ENCODE measurements at regions of chrX and their contacts with region 1.

Region 1: DNA sequence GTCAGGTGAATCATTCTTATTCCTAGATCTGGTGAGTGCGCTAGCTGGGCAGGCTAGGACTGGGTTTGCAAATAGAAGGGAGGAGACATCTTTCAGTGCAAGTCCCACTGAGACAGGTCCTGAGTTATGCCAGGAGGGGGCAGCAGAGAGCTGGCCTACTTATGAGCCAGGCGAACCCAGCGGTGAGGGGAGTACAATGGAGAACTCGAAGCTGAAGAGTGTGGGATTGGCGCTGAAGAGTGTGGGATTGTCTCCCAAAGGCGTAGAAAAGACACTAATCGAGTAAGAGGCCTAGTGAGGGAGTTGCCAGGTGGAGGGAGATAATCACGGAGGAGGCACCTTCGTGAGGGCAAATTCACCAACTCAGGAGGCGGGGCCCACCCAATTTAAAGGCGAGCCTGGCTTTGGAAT is 91.7 kb upstream of the CXorf66 start:
- DNase-seq: peak; percentile 35 to 69 (median 56)
- ATAC-seq: peak in 3 of 4 donors; percentile 57 to 80 (median 78)
- H3K4me3 ChIP-seq: no peak overlapping the region
- H3K27ac ChIP-seq: no peak overlapping the region
- H3K4me1 ChIP-seq: no peaks in the 10 kb centered on the region
- H3K27me3 ChIP-seq: peaks cover 0 to 15% (median 0%) of the 10 kb centered on the region in 9 donors
- CTCF ChIP-seq: peak; percentile 56 to 84 (median 72)
- POLR2A ChIP-seq: no peak

Region 2: GRCh38 chrX:140086691-140087090 is 29.7 kb after region 1 on chrX:
- intact Hi-C with region 1: loop called in 1 of 10 experiments (anchors 2 kb)
- DNase-seq: no peak
- ATAC-seq: no peak
- H3K4me3 ChIP-seq: no peak overlapping the region
- H3K27ac ChIP-seq: no peak overlapping the region
- H3K4me1 ChIP-seq: peaks cover 0 to 2% (median 0%) of the 10 kb centered on the region in 12 donors
- H3K27me3 ChIP-seq: peaks cover 0 to 40% (median 0%) of the 10 kb centered on the region in 9 donors
- CTCF ChIP-seq: no peak
- POLR2A ChIP-seq: no peak

Region 3: GRCh38 chrX:140141444-140142029 is 84.5 kb after region 1 on chrX:
- intact Hi-C with region 1: loop called in 4 of 10 experiments (anchors 5 kb)
- DNase-seq: no peak
- ATAC-seq: no peak
- H3K4me3 ChIP-seq: no peak overlapping the region
- H3K27ac ChIP-seq: no peak overlapping the region
- H3K4me1 ChIP-seq: no peaks in the 10 kb centered on the region
- H3K27me3 ChIP-seq: peaks cover 0 to 17% (median 0%) of the 10 kb centered on the region in 9 donors
- CTCF ChIP-seq: peak in 11 of 12 donors; percentile 36 to 73 (median 57)
- POLR2A ChIP-seq: no peak

Region 4: DNA sequence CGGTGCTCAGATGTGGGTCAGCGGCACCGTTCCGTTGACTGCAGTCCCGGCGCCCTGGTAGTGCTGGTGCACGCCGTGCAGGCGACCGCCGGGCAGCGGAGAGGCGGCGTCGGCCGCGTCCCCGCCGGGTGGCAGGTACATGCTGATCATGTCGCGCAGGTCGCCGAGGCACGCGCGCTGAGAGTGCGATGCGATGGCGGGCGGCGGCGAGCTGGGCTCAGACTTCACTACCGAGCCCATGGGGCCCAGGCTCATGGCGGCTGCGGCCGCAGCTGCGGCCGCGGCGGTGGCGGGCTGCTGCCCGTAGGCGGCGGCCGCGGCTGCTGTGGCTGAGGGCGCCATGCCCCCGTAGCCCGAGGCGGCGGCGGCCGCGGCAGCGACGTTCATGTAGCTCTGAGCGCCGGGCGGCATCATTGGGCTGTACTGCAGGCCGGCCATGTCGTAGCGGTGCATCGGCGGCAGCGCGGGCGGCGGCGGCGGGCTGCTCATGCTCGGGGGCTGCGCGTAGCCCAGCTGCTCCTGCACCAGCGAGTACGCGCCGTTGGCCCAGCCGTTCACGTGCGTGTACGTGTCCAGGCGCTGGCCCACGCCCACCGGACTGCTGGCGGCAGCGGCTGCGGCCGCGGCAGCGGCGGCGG is 446.8 kb after region 1 on chrX:
- intact Hi-C with region 1: loop called in 3 of 10 experiments (anchors 5 to 10 kb)
- DNase-seq: peak in 1 of 5 donors; percentile 15
- ATAC-seq: peak in 2 of 4 donors; percentile 67 to 73
- H3K4me3 ChIP-seq: peak overlapping the region in 9 of 12 donors; percentile 5 to 45 (median 36)
- H3K27ac ChIP-seq: no peak overlapping the region
- H3K4me1 ChIP-seq: peaks cover 0 to 36% (median 0%) of the 10 kb centered on the region in 12 donors
- H3K27me3 ChIP-seq: peaks cover 10 to 96% (median 55%) of the 10 kb centered on the region in 9 donors
- CTCF ChIP-seq: peak in 2 of 12 donors; percentile 5 to 15
- POLR2A ChIP-seq: no peak

Region 5: GRCh38 chrX:140664939-140665338 is 607.9 kb after region 1 on chrX:
- intact Hi-C with region 1: loop called in 9 of 10 experiments (anchors 5 to 10 kb)
- DNase-seq: no peak
- ATAC-seq: no peak
- H3K4me3 ChIP-seq: no peak overlapping the region
- H3K27ac ChIP-seq: no peak overlapping the region
- H3K4me1 ChIP-seq: no peaks in the 10 kb centered on the region
- H3K27me3 ChIP-seq: peaks cover 0 to 10% (median 0%) of the 10 kb centered on the region in 9 donors
- CTCF ChIP-seq: peak in 9 of 12 donors; percentile 10 to 39 (median 23)
- POLR2A ChIP-seq: no peak

Region 6: DNA sequence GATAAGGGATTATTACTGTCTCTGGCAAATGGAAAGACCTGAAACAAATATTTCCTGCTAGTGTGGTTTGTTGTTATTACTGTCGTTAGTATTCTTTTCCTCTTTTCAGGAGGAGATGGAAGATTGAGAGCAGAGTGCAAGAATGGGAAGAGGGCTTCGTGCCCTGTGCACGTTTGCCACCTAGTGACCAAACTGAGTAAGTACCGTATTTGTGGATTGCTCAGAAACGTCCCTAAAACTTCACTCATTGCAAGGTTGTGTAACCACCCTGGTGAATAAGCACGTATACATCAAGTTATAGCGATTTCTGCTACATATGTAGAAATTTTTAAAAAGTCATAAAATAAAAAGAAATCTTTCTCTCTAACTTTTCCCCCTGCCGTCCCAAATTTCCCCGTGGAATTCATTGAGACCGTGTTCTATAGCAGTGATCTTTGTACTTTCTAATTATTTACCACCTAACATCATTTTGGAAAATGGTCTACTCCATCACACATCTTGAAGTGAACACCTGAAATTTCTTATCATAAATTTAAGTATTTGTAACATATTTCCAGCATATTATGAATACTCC is 676.9 kb after region 1 on chrX:
- intact Hi-C with region 1: loop called in 2 of 10 experiments (anchors 10 kb)
- DNase-seq: no peak
- ATAC-seq: peak in 2 of 4 donors; percentile 53 to 75
- H3K4me3 ChIP-seq: no peak overlapping the region
- H3K27ac ChIP-seq: no peak overlapping the region
- H3K4me1 ChIP-seq: no peaks in the 10 kb centered on the region
- H3K27me3 ChIP-seq: peaks cover 0 to 7% (median 0%) of the 10 kb centered on the region in 9 donors
- CTCF ChIP-seq: peak; percentile 27 to 75 (median 66)
- POLR2A ChIP-seq: no peak